Activated T-helper 2 cell treated with anti-CD3 and anti-CD28 coated beads, Interferon-gamma antibody, Interleukin-2, Interleukin-4, amounts not matched to agents 10 μg/mL and 5 μg/mL and 100 μg/mL, durations not matched to agents 14 hours and 24 hours and 36 hours (primary cell): ENCODE measurements at regions of chr21 and their contacts with region 1.

Region 1: GRCh38 chr21:14382835-14383594 is at the start of gene HSPA13:
- DNase-seq: peak; percentile 99
- H3K4me3 Mint-ChIP-seq: peak within 1 kb of the TSS; percentile 98
- H3K27ac Mint-ChIP-seq: peak within 1 kb of the TSS; percentile 98
- H3K4me1 Mint-ChIP-seq: peaks cover 34% of the 10 kb centered on the region
- H3K27me3 Mint-ChIP-seq: peaks cover 3% of the 10 kb centered on the region
- total RNA-seq, gene HSPA13: 40.6 and 47.6 TPM in 2 replicates

Region 2: GRCh38 chr21:14086553-14086952 is 296.5 kb before region 1 on chr21:
- intact Hi-C with region 1: loop called (anchors 5 kb)
- DNase-seq: no peak
- H3K4me3 Mint-ChIP-seq: no peak overlapping the region
- H3K27ac Mint-ChIP-seq: peak overlapping the region; percentile 81
- H3K4me1 Mint-ChIP-seq: peaks cover 13% of the 10 kb centered on the region
- H3K27me3 Mint-ChIP-seq: no peaks in the 10 kb centered on the region